ENCODE measurements at regions of chr17 and their contacts with region 1.

Region 1: DNA sequence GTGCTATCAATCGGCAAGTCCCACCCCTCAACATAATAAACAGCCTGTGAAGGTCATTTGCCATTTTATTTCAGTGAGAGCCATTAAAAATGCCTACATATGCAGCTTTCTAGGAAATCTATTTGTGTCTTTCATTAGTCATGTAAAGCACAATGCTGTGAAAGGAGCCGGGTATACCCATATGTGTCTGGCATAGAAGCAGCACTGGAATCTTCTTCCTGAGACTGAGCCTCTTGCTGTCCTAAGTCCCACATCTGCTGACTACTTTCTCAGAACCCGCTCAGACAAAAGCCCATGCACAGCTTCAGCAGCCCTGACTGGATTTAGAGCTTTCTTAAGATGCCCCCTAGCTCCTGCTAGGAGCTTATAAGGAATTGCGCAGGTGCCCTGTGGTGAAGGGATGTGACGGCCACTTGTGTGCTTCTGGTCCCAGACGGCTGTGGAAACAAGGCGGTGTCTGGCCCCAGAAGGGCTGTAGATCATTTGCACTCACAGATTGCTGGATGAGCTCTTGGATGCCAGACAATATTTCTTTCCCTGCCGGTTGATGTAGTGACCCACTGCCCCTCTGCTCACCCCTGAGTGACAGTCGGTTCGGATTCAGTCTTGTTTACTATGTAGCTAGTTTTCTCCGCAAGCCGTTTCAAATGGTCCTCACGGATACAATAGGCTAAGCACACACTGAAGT is 172.2 kb downstream of the ANKFN1 start:
- DNase-seq: no peak
- H3K4me3 ChIP-seq: no peak overlapping the region
- H3K4me3 Mint-ChIP-seq: no peak overlapping the region
- H3K27ac ChIP-seq: no peak overlapping the region
- H3K27ac Mint-ChIP-seq: peak overlapping the region in 1 of 7 donors; percentile 14
- H3K4me1 ChIP-seq: no peaks in the 10 kb centered on the region
- H3K4me1 Mint-ChIP-seq: no peaks in the 10 kb centered on the region
- H3K27me3 ChIP-seq: no peaks in the 10 kb centered on the region
- H3K27me3 Mint-ChIP-seq: peaks cover 0 to 2% (median 0%) of the 10 kb centered on the region in 3 donors
- CTCF ChIP-seq: no peak

Region 2: DNA sequence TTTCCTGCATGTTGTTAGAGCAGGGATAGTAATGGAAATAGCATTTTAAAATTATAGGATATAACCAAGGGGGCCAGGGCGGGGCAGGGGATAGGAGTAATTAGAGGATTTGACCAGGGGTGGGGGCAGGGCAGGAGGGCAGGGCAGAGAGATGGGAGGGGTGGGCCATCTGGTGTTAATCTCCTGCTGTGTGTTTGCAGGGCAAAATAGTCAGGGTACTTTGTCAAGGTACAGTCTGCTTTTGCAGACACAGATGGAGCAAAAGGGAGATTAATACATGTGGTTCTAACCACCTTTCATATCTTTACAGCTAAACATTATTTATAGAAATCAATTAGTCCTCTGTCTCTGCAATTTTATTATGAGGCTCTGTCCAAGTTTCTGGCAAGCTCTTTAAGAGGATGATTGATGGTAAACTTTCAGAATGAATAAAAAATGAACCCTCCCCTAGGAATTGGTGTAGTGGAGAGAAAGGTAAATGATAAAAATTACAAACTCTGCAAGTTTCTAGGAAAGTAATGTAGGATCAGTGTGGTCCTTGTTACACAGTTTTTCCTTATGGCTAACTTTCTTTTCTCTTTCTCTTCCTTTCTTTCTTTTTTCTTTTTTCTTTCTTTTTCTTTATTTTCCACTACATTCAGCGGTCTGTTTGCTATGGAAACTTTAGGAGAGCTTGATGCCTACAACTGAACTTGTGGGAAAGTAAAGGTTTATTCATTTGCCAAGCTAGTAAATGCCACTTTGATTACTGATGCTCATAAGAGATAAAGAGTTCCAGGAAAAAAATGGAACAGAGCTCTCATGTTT is 165.4 kb before region 1 on chr17:
- intact Hi-C with region 1: loop called in 1 of 2 experiments (anchors 10 kb)
- DNase-seq: no peak
- H3K4me3 ChIP-seq: no peak overlapping the region
- H3K4me3 Mint-ChIP-seq: no peak overlapping the region
- H3K27ac ChIP-seq: peak overlapping the region in 1 of 2 donors; percentile 72
- H3K27ac Mint-ChIP-seq: no peak overlapping the region
- H3K4me1 ChIP-seq: peaks cover 28 to 35% of the 10 kb centered on the region in 2 donors
- H3K4me1 Mint-ChIP-seq: peaks cover 41% of the 10 kb centered on the region
- H3K27me3 ChIP-seq: no peaks in the 10 kb centered on the region
- H3K27me3 Mint-ChIP-seq: no peaks in the 10 kb centered on the region
- CTCF ChIP-seq: no peak